A549 (cell line): ENCODE measurements at regions of chr12 and their contacts with region 1.

Region 1: DNA sequence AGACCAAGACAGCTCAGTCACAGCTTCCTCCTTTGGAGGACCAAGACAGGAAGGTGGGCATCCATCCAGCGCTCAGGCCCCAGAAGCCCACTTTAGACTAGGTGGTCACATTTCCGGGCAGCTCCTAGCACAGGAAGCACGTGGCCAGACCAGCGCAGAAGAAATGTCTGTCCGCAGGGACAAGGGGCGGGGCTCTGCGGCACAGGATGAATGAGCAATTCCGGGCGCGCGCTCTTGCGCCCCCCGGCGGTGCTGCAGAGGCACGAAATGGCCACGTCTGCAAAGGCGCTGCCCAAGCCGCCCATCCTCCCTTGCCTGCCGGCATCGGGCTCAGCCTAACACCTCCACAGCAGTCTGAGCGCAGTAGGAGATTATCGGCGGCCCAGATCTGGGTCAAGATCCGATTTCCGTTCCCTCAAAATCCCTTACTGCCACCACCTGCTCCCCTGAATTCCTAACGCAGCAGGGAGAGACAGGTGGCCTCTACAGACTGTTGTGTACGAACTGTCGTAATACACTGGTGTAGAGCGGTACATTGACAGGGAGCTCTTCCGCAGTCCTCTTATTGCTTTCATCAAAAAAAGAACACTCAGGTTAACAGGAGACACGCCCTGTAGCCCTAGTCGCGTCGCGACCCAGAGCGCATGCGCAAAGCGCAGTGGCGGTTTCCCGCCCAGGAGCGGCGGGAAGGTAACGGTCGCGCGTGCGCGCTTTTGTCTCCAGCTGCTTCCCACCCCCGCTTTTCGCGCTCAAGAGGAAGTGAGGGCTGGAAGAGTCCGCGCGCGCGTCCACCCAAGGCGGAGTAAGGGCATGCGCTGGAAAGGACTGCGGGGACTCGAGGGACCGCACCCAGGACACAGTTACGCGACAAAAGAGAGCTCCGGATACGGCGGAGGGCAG is 794 bp downstream of the TUBA1B start:
- DNase-seq: peak; percentile 84 to 96
- ATAC-seq: peak; percentile 74 to 80
- H3K4me3 ChIP-seq: peak overlapping the region; percentile 93
- H3K27ac ChIP-seq: peak overlapping the region; percentile 99
- H3K4me1 ChIP-seq: peaks cover 27% of the 10 kb centered on the region
- CTCF ChIP-seq: peak; percentile 90
- EP300 ChIP-seq: no peak
- POLR2A ChIP-seq: peak; percentile 44
- RAD21 ChIP-seq: peak; percentile 22 to 62

Region 2: DNA sequence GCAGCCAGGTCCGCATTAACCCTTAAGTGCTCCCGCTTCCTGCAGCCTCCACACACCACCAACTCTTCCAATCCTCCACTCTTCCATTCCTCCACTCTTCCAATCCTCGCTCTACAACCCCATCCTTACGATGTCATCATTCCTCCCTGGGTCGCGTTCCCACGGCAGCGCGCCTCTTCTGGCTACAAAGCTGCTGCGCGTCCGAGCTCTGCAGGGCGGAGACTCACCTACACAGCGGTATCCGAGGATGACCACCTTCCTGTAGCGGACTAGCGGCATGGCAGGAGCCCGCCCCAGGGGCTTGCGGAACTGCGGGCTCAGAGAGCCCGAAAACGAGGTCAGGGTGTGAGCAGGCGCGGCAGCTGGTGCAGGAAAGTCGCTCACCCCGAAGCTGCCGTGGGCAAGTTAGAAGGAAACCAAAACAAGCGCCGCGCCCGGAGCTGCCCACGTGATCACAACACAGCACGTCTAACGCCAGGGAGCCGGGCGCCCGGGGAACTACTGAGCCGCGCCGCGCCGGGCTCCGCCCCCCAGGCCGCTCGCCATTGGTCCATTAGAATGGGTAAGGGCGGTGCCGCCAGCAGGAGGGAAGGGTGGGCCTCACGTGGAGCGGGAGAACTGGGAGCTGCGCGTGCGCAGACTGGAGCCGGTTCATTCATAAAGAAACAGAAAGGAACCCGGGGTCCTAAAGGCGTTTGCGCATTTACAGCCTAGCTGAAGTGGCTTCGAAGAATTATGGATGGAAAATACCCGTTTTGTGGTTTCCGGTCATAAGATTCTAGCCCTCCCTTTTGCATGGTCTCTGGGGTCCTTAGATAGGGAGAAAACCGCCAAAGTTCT is 60.7 kb before region 1 on chr12 and contains the start of gene RHEBL1:
- CTCF ChIA-PET with region 1: interaction called, 19 read pairs
- POLR2A ChIA-PET with region 1: interaction called, 27 read pairs
- DNase-seq: peak; percentile 97 to 98
- ATAC-seq: peak; percentile 97 to 99
- H3K4me3 ChIP-seq: peak within 1 kb of the TSS; percentile 55
- H3K27ac ChIP-seq: peak within 1 kb of the TSS; percentile 62 to 85
- H3K4me1 ChIP-seq: peaks cover 7% of the 10 kb centered on the region; the same call in 2 of the 3 replicates
- CTCF ChIP-seq: no peak
- EP300 ChIP-seq: no peak
- POLR2A ChIP-seq: no peak
- RAD21 ChIP-seq: no peak
- polyA plus RNA-seq, gene RHEBL1: 4.0 TPM in 2 replicates

Region 3: DNA sequence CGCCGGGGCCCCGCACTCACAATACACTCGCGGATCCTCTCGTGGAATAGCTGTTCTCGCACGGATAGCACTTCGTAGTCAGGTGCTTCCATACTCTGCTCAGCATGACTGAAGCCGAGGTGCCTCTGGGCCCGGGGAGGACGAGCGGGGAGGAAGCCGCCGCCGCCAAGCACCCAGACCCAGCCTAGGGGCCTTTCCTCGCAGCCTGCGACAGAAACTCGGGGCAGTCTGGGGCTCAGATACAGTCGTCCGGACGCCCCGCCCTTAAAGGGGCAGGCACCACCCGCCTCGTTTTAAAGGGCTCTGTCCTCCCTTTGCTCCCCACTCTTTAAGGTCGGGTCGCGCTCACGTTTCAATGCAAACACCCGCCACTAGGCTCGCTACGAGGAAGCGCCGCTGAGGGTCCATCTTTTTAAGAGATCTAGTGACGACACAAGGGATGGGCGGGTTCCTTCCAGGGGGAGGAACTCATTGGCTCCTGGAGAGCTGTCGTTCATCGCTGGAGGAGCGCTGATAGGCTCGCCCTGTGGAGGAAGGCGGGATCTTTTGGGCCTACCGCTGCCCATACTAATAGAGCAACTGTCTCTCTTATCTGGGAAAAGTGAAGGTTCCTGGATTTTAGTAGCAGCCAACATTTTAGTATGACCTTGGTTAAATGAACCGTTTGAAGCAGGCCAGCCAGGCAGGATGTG is 19.8 kb before region 1 on chr12 and contains the start of gene LMBR1L:
- CTCF ChIA-PET with region 1: interaction called, 115 read pairs
- POLR2A ChIA-PET with region 1: interaction called, 39 read pairs
- DNase-seq: peak; percentile 99 to 100
- ATAC-seq: peak; percentile 98 to 99
- H3K4me3 ChIP-seq: peak within 1 kb of the TSS; percentile 89
- H3K27ac ChIP-seq: peak within 1 kb of the TSS; percentile 79 to 93
- H3K4me1 ChIP-seq: peaks cover 15% of the 10 kb centered on the region
- CTCF ChIP-seq: no peak
- EP300 ChIP-seq: no peak
- POLR2A ChIP-seq: peak; percentile 65
- RAD21 ChIP-seq: no peak
- polyA plus RNA-seq, gene LMBR1L: 25.1 and 35.7 TPM in 2 replicates

Region 4: DNA sequence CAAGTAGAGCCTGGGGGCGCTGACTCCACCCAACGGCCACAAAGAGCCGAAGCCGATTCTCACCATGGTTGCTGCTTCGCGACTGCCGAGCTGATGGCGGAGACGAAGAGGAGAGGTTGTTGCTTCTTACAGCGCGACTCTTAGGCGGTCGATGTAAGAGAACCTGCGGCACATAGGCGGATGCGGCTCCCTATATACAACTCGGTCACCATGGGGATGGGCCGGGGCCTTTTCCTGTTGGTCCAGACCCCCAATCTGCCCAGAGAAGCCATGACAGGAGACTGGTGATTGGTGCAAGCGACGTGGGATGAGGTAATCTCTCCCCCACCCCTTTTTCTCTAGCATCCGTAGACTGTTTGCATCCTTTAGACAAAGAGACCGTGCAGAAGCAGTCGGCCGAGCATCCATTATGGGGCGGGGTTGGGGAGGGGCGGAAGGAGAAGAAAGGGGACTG is 58.5 kb after region 1 on chr12 and contains the start of gene TUBA1A:
- CTCF ChIA-PET with region 1: interaction called, 6 read pairs
- POLR2A ChIA-PET with region 1: interaction called, 66 read pairs
- DNase-seq: peak; percentile 95 to 99
- ATAC-seq: peak; percentile 95
- H3K4me3 ChIP-seq: peak within 1 kb of the TSS; percentile 89
- H3K27ac ChIP-seq: peak within 1 kb of the TSS; percentile 90 to 92
- H3K4me1 ChIP-seq: peaks cover 19% of the 10 kb centered on the region
- CTCF ChIP-seq: no peak
- EP300 ChIP-seq: no peak
- POLR2A ChIP-seq: peak; percentile 99
- RAD21 ChIP-seq: peak in 1 of 2 experiments; percentile 47; a peak in 3 of 5 replicates
- polyA plus RNA-seq, gene TUBA1A: 163 and 231 TPM in 2 replicates

Region 5: GRCh38 chr12:49225556-49226181 is 95.3 kb after region 1 on chr12:
- CTCF ChIA-PET with region 1: interaction called, 56 read pairs
- POLR2A ChIA-PET with region 1: interaction called, 10 read pairs
- DNase-seq: peak in 1 of 2 experiments; percentile 44
- ATAC-seq: peak in 1 of 2 experiments; percentile 67; a peak in 3 of 6 replicates
- H3K4me3 ChIP-seq: no peak overlapping the region
- H3K27ac ChIP-seq: 0 out of 6 replicates have a peak overlapping the region, but pooled peaks of 1 of the 2 experiments have one; percentile 11
- H3K4me1 ChIP-seq: no peaks in the 10 kb centered on the region
- CTCF ChIP-seq: no peak
- EP300 ChIP-seq: no peak
- POLR2A ChIP-seq: no peak
- RAD21 ChIP-seq: no peak

Region 6: DNA sequence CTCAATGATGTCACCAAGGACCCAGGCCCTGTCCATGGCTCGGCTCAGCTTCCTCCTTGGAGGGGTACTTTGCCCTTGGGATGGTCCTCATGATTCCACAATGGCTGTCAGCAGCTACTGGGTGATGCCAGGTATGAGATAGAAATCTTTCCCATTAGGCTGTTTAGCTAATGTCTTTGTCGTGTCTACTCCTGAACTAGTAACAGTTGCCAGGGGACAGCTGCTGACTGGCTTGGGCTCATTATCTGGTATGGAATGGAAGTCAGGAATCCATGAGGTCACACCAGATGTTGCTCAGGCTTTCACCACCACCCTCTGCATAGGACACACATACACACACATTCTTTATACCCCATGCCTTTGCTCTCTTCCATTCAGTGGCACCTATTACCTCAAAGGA is 173.8 kb after region 1 on chr12:
- CTCF ChIA-PET with region 1: no interaction called
- POLR2A ChIA-PET with region 1: interaction called, 11 read pairs
- DNase-seq: no peak
- ATAC-seq: peak in 1 of 2 experiments; percentile 37; a peak in 2 of 6 replicates
- H3K4me3 ChIP-seq: no peak overlapping the region
- H3K27ac ChIP-seq: no peak overlapping the region
- H3K4me1 ChIP-seq: no peaks in the 10 kb centered on the region
- CTCF ChIP-seq: no peak
- EP300 ChIP-seq: no peak
- POLR2A ChIP-seq: no peak
- RAD21 ChIP-seq: no peak

Region 7: DNA sequence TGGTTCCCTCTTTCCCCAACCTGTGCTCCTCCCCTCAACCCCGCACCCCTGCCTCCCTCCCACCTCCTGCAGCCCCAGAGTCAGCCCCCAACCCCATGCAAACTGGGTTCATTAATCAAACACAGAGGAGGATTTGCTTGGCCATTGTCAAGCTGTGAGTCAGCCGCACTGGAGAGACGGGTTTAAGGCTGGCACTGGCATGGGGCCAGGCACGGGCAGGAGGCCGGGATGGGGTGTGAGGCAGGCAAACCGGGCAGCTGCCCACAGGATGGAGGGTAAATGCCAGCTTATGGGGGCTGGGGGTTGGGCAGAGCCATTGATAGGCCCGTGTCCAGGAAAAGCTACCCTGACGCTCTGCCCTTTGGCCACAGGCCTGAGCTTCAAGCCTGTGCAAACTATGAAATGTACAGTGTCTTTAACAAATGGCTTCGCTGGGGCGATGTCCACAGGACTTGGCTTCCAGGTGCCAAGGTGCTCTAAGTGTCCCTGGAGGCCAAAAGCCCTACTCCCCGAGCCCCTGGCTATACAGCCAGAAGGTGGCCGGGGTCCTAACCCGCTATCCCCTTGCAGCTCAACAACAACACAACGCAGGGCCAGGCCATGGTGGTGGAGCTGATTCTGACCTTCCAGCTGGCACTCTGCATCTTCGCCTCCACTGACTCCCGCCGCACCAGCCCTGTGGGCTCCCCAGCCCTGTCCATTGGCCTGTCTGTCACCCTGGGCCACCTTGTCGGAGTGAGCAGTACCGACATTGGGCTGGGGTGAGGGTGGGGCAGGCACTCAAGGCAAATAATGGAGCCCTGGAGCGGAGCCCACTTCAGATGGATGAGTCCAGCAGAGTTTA is 832.7 kb after region 1 on chr12:
- CTCF ChIA-PET with region 1: no interaction called
- POLR2A ChIA-PET with region 1: no interaction called
- DNase-seq: peak; percentile 65 to 77
- ATAC-seq: peak; percentile 12 to 15; a peak in 3 of 6 replicates
- H3K4me3 ChIP-seq: no peak overlapping the region
- H3K27ac ChIP-seq: peak overlapping the region in 1 of 2 experiments; percentile 74; a peak in 3 of 6 replicates
- H3K4me1 ChIP-seq: peaks cover 30% of the 10 kb centered on the region
- CTCF ChIP-seq: no peak
- EP300 ChIP-seq: no peak
- POLR2A ChIP-seq: no peak
- RAD21 ChIP-seq: no peak